PC-3 (cell line): ENCODE measurements at regions of chr12 and their contacts with region 1.

Region 1: GRCh38 chr12:106955377-106956047 is at the start of gene TMEM263:
- DNase-seq: peak; percentile 94
- ATAC-seq: peak; percentile 77
- H3K4me3 ChIP-seq: peak within 1 kb of the TSS; percentile 80
- H3K27ac ChIP-seq: peak within 1 kb of the TSS; percentile 32
- H3K4me1 ChIP-seq: peaks cover 20% of the 10 kb centered on the region
- H3K27me3 ChIP-seq: no peaks in the 10 kb centered on the region
- CTCF ChIP-seq: 0 out of 2 replicates have a peak, but pooled peaks have one; percentile 23
- total RNA-seq, gene TMEM263: 42.7 and 59.7 TPM in 2 replicates

Region 2: GRCh38 chr12:106296193-106296877 is 659.2 kb before region 1 on chr12:
- CTCF ChIA-PET with region 1: no interaction called
- POLR2A ChIA-PET with region 1: no interaction called
- intact Hi-C with region 1: loop called (anchors 5 kb)
- DNase-seq: peak; percentile 98
- ATAC-seq: peak; percentile 95
- H3K4me3 ChIP-seq: no peak overlapping the region
- H3K27ac ChIP-seq: peak overlapping the region; percentile 82
- H3K4me1 ChIP-seq: peaks cover 26% of the 10 kb centered on the region
- H3K27me3 ChIP-seq: no peaks in the 10 kb centered on the region
- CTCF ChIP-seq: no peak

Region 3: GRCh38 chr12:106380131-106380530 is 575.4 kb before region 1 on chr12:
- CTCF ChIA-PET with region 1: no interaction called
- POLR2A ChIA-PET with region 1: interaction called, 27 read pairs
- intact Hi-C with region 1: no loop called
- DNase-seq: no peak
- ATAC-seq: no peak
- H3K4me3 ChIP-seq: no peak overlapping the region
- H3K27ac ChIP-seq: no peak overlapping the region
- H3K4me1 ChIP-seq: no peaks in the 10 kb centered on the region
- H3K27me3 ChIP-seq: no peaks in the 10 kb centered on the region
- CTCF ChIP-seq: no peak

Region 4: GRCh38 chr12:106986625-106987430 is 31.3 kb after region 1 on chr12 and contains the start of gene MTERF2:
- CTCF ChIA-PET with region 1: interaction called, 3 read pairs
- POLR2A ChIA-PET with region 1: interaction called, 5 read pairs
- intact Hi-C with region 1: loop called (anchors 2 kb)
- DNase-seq: peak; percentile 96
- ATAC-seq: peak; percentile 89
- H3K4me3 ChIP-seq: peak within 1 kb of the TSS; percentile 86
- H3K27ac ChIP-seq: 0 out of 2 replicates have a peak within 1 kb of the TSS, but pooled peaks have one; percentile 16
- H3K4me1 ChIP-seq: peaks cover 26% of the 10 kb centered on the region
- H3K27me3 ChIP-seq: no peaks in the 10 kb centered on the region
- CTCF ChIP-seq: no peak
- total RNA-seq, gene MTERF2: 10.7 and 14.2 TPM in 2 replicates